ENCODE measurements at regions of chr4 and their contacts with region 1.

Region 1: GRCh38 chr4:2934813-2935761 is 28.1 kb downstream of the NOP14 start:
- DNase-seq: peak; percentile 89
- H3K4me3 Mint-ChIP-seq: peak overlapping the region; percentile 76
- H3K27ac Mint-ChIP-seq: peak overlapping the region; percentile 84
- H3K4me1 Mint-ChIP-seq: peaks cover 33% of the 10 kb centered on the region
- H3K27me3 Mint-ChIP-seq: no peaks in the 10 kb centered on the region
- CTCF ChIP-seq: no peak

Region 2: GRCh38 chr4:2536193-2537010 is 398.7 kb before region 1 on chr4 and contains the start of gene FAM193A:
- CTCF ChIA-PET with region 1: no interaction called
- POLR2A ChIA-PET with region 1: interaction called, 11 read pairs
- intact Hi-C with region 1: no loop called
- DNase-seq: peak; percentile 99
- H3K4me3 Mint-ChIP-seq: peak within 1 kb of the TSS; percentile 81
- H3K27ac Mint-ChIP-seq: peak within 1 kb of the TSS; percentile 81
- H3K4me1 Mint-ChIP-seq: no peaks in the 10 kb centered on the region
- H3K27me3 Mint-ChIP-seq: no peaks in the 10 kb centered on the region
- CTCF ChIP-seq: no peak
- total RNA-seq, gene FAM193A: 30.7 and 31.3 TPM in 2 replicates

Region 3: DNA sequence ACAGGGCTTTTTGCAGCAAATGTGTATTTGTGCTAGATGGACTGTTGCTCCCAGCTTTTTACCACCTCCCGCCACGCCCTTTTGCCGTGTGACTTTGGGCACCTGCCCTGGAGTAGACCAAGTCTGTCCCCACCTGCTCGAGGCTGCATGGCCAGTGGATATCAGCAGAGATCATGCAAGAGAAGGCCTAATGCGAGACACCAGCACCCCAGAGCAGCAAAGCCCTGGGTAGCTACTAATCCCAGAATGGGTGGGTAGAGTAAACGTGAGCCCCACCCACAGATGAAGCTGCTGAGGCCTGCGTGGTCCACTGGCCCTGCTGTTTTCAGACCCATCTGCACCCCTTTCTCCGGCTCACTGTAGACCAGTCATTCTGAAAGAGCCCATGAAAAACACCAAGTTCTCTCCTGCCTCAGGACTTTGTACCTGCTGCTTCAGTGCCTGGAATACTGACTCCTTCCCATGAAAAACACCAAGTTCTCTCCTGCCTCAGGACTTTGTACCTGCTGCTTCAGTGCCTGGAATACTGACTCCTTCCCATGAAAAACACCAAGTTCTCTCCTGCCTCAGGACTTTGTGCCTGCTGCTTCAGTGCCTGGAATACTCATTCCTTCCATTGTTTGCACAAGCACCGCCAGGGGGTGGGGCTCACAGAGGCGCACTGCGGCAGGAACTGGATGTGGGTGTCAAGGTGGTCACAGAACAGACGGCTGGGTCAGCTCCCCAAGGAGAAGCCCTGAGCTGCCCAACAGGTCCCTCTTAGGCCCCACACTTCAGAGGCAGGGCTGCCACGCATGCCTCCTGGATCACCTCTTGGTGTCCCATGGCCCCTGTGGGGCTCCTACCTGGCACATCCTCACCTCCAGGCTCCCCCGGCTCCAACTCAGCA is 173.8 kb before region 1 on chr4:
- CTCF ChIA-PET with region 1: interaction called, 4 read pairs
- POLR2A ChIA-PET with region 1: interaction called, 27 read pairs
- intact Hi-C with region 1: loop called (anchors 1 kb)
- DNase-seq: peak; percentile 45
- H3K4me3 Mint-ChIP-seq: no peak overlapping the region
- H3K27ac Mint-ChIP-seq: no peak overlapping the region
- H3K4me1 Mint-ChIP-seq: peaks cover 7% of the 10 kb centered on the region
- H3K27me3 Mint-ChIP-seq: no peaks in the 10 kb centered on the region
- CTCF ChIP-seq: no peak

Region 4: GRCh38 chr4:2843263-2843940 is 91.7 kb before region 1 on chr4 and contains the start of gene ADD1:
- CTCF ChIA-PET with region 1: no interaction called
- POLR2A ChIA-PET with region 1: interaction called, 4 read pairs
- intact Hi-C with region 1: loop called (anchors 5 kb)
- DNase-seq: peak; percentile 83
- H3K4me3 Mint-ChIP-seq: peak within 1 kb of the TSS; percentile 88
- H3K27ac Mint-ChIP-seq: peak within 1 kb of the TSS; percentile 95
- H3K4me1 Mint-ChIP-seq: peaks cover 19% of the 10 kb centered on the region
- H3K27me3 Mint-ChIP-seq: no peaks in the 10 kb centered on the region
- CTCF ChIP-seq: no peak
- total RNA-seq, gene ADD1: 131 and 161 TPM in 2 replicates

Region 5: GRCh38 chr4:2954358-2955185 is 19.5 kb after region 1 on chr4:
- CTCF ChIA-PET with region 1: interaction called, 30 read pairs
- POLR2A ChIA-PET with region 1: interaction called, 43 read pairs
- intact Hi-C with region 1: no loop called
- DNase-seq: no peak
- H3K4me3 Mint-ChIP-seq: no peak overlapping the region
- H3K27ac Mint-ChIP-seq: no peak overlapping the region
- H3K4me1 Mint-ChIP-seq: peaks cover 5% of the 10 kb centered on the region
- H3K27me3 Mint-ChIP-seq: no peaks in the 10 kb centered on the region
- CTCF ChIP-seq: peak; percentile 27

Measured in MCF 10A (cell line).